ENCODE measurements at regions of chr20 and their contacts with region 1.

Region 1: GRCh38 chr20:15708984-15709598 is 864.2 kb downstream of the KIF16B start:
- DNase-seq: peak; percentile 78
- H3K4me3 Mint-ChIP-seq: no peak overlapping the region
- H3K27ac Mint-ChIP-seq: no peak overlapping the region
- H3K4me1 Mint-ChIP-seq: no peaks in the 10 kb centered on the region
- H3K27me3 Mint-ChIP-seq: no peaks in the 10 kb centered on the region

Region 2: GRCh38 chr20:15318682-15319081 is 390.4 kb before region 1 on chr20:
- intact Hi-C with region 1: no loop called
- DNase-seq: no peak
- H3K4me3 Mint-ChIP-seq: no peak overlapping the region
- H3K27ac Mint-ChIP-seq: no peak overlapping the region
- H3K4me1 Mint-ChIP-seq: no peaks in the 10 kb centered on the region
- H3K27me3 Mint-ChIP-seq: no peaks in the 10 kb centered on the region

Region 3: GRCh38 chr20:15682690-15683089 is 26.4 kb before region 1 on chr20:
- intact Hi-C with region 1: loop called (anchors 1 kb)
- DNase-seq: no peak
- H3K4me3 Mint-ChIP-seq: no peak overlapping the region
- H3K27ac Mint-ChIP-seq: no peak overlapping the region
- H3K4me1 Mint-ChIP-seq: no peaks in the 10 kb centered on the region
- H3K27me3 Mint-ChIP-seq: no peaks in the 10 kb centered on the region

Region 4: DNA sequence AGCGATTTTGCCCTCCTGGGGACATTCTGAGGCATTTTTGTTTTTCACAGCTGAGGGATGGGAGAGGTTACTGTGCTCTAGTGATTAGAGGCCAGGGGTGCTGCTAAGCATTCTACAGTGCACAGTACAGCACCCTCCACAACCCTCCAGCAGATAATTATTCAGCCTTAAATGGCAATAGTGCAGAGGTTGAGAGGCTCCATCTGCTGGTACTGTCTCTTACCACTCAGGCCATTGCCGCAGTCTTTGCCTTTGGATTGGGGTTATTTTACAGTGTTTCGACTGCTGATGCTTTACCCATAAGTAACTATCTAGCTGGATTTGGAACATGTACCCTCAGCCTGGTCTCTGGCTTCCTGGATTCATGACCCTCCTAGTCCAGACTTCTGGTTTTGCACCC is 158.8 kb after region 1 on chr20:
- intact Hi-C with region 1: no loop called
- DNase-seq: no peak
- H3K4me3 Mint-ChIP-seq: no peak overlapping the region
- H3K27ac Mint-ChIP-seq: no peak overlapping the region
- H3K4me1 Mint-ChIP-seq: no peaks in the 10 kb centered on the region
- H3K27me3 Mint-ChIP-seq: no peaks in the 10 kb centered on the region

Region 5: GRCh38 chr20:16476032-16476431 is 766.9 kb after region 1 on chr20:
- intact Hi-C with region 1: loop called (anchors 10 kb)
- DNase-seq: peak; percentile 60
- H3K4me3 Mint-ChIP-seq: no peak overlapping the region
- H3K27ac Mint-ChIP-seq: no peak overlapping the region
- H3K4me1 Mint-ChIP-seq: peaks cover 4% of the 10 kb centered on the region
- H3K27me3 Mint-ChIP-seq: no peaks in the 10 kb centered on the region